RWPE1 (cell line): ENCODE measurements at regions of chr5 and their contacts with region 1.

Region 1: DNA sequence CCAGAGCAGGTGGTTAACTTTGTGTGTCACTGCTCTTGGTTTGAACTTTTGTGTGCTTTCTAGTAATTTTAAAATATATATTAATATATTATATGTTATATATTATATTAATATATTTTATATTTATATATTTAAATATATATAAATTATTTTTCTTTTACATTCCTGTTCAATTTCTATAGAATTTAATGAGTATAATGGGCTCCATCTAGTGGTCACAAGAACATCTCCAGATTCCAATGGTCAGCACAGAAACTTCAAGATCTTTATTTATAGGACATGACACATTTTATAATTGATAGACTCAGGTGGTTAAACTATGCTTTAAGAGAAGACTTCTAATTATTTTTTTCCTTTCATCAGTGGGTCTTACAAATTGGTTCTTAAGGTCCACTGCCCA is 39.1 kb downstream of the COL23A1 start:
- DNase-seq: peak; percentile 65
- H3K27ac ChIP-seq: no peak overlapping the region
- CTCF ChIP-seq: peak; percentile 40; the same call in 1 of the 2 replicates

Region 2: GRCh38 chr5:178279725-178280438 is 271.2 kb before region 1 on chr5:
- CTCF ChIA-PET with region 1: interaction called, 11 read pairs
- POLR2A ChIA-PET with region 1: interaction called, 7 read pairs
- DNase-seq: peak; percentile 91
- H3K27ac ChIP-seq: no peak overlapping the region
- CTCF ChIP-seq: peak; percentile 97